Cardiac septum (tissue), 1 donor: ENCODE measurements at regions of chr7 and their contacts with region 1.

Region 1: GRCh38 chr7:139944248-139944647 is 115.2 kb downstream of the TBXAS1 start:
- DNase-seq: no peak

Region 2: GRCh38 chr7:139798221-139798620 is 146.0 kb before region 1 on chr7:
- intact Hi-C with region 1: no loop called
- DNase-seq: no peak

Region 3: GRCh38 chr7:139930286-139930965 is 13.8 kb before region 1 on chr7:
- intact Hi-C with region 1: loop called (anchors 2 kb)
- DNase-seq: no peak